A549 (cell line): ENCODE measurements at regions of chr14 and their contacts with region 1.

Region 1: DNA sequence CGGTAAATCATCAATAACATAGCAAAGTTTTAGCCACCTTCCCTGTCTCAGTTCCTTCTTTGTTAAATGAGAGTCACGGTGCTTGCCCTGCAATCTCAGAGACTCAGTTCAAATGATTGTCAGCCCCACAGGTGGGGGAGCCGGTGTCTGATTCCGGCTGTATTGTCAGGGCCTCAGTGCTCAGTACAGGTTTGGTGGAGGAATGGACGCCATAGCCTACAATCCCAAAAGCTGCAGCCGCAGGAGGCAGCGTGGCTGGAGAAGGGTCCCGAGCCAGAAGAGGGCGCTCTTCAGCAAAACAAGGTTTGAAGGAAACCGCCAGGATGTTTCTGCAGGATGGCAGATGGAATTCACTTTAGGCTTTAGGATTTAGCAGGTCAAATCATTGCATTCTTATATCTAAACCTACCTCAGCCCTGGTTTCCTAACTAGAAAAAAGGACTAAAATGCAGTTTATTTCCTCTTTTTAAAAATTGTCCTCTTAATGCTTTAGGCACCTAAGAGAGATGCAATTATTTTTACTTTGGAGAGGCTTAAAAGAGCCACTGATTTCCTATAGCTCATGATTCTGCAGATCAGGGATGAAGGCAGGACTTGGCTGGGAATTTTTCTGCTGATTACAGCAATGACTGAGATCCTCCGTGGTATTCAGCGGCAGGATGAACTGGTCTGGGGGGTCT is 29.2 kb downstream of the FOS start:
- DNase-seq: peak; percentile 64 to 85
- ATAC-seq: peak; percentile 89 to 91
- H3K4me3 ChIP-seq: no peak overlapping the region
- H3K27ac ChIP-seq: peak overlapping the region; percentile 51 to 66; a peak in 4 of 6 replicates
- H3K4me1 ChIP-seq: peaks cover 29% of the 10 kb centered on the region
- CTCF ChIP-seq: peak; percentile 95
- EP300 ChIP-seq: no peak
- POLR2A ChIP-seq: no peak
- RAD21 ChIP-seq: peak; percentile 95

Region 2: GRCh38 chr14:75205591-75205990 is 102.2 kb before region 1 on chr14:
- CTCF ChIA-PET with region 1: no interaction called
- POLR2A ChIA-PET with region 1: no interaction called
- DNase-seq: no peak
- ATAC-seq: no peak
- H3K4me3 ChIP-seq: no peak overlapping the region
- H3K27ac ChIP-seq: no peak overlapping the region
- H3K4me1 ChIP-seq: no peaks in the 10 kb centered on the region
- CTCF ChIP-seq: no peak
- EP300 ChIP-seq: no peak
- POLR2A ChIP-seq: no peak
- RAD21 ChIP-seq: no peak

Region 3: GRCh38 chr14:75277000-75277801 is 30.6 kb before region 1 on chr14:
- CTCF ChIA-PET with region 1: no interaction called
- POLR2A ChIA-PET with region 1: no interaction called
- DNase-seq: peak; percentile 85 to 90
- ATAC-seq: peak; percentile 70 to 75
- H3K4me3 ChIP-seq: peak overlapping the region; percentile 65
- H3K27ac ChIP-seq: peak overlapping the region; percentile 85 to 97
- H3K4me1 ChIP-seq: peaks cover 14% of the 10 kb centered on the region
- CTCF ChIP-seq: no peak; the same call in 2 of the 3 replicates
- EP300 ChIP-seq: no peak
- POLR2A ChIP-seq: no peak
- RAD21 ChIP-seq: no peak; a peak in 1 of 5 replicates

Region 4: DNA sequence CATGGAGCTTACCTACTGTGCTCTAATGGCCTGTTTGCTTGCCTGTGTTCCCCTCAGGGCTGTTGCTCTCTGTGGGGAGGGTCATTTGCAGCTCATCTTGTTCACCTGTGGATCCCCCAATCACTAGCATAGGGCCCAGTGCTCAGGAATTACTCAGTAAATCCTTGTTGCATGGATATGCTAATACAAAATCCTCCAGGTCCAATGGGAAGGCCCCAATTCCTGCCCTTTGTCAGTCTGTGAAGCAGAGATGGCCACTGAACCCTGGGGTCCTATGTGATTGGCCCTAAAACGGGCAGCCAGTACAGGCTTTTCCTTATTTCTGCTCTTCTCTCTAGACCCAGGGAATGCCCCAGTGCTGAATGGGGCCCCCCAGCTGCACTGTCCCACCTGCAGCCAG is 14.9 kb after region 1 on chr14:
- CTCF ChIA-PET with region 1: interaction called, 40 read pairs
- POLR2A ChIA-PET with region 1: no interaction called
- DNase-seq: no peak
- ATAC-seq: no peak
- H3K4me3 ChIP-seq: no peak overlapping the region
- H3K27ac ChIP-seq: no peak overlapping the region
- H3K4me1 ChIP-seq: no peaks in the 10 kb centered on the region
- CTCF ChIP-seq: no peak
- EP300 ChIP-seq: no peak
- POLR2A ChIP-seq: no peak
- RAD21 ChIP-seq: no peak

Region 5: DNA sequence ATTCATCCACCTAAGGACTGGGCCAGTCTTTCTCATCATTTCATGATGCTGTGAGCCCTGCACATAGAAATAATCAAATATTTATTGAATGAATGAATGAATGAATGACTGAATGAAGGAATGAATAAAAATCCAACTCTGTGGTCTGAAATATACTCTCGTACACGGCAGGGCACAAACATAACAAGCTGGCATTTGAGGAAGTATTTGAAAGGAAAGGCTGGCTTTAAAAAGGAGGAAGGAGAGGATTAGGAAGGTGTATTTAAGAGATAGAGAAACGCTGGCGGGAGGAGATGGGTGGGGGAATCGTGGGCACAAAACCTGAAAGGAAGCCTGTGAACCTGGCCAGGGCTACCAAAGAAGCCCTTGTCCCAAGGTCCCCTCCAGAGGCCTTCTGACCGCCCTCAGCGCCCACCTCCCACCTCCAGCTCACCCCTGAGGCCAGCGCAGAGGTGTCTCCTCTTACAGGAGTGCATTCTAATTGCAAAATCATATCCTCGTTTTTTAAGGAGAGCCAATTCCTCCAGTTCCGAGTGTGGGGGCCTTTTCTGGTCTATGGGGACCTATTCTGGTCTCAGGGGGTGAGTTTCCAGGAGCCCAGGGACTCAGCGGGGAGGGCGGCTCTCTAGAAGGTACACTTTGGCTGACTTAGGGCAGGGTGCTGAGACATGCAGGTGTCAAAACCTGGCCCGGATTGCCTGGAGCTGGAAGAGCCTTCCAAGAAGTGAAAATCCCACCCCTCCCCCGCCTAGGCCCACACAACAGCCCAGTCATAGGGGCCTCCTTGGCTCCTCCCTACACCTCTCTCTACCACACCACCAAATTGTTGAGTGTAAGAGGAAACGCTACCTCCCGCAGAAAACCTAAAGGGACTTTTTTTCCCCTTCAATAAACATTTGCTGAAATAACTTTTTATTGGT is 111.3 kb after region 1 on chr14:
- CTCF ChIA-PET with region 1: interaction called, 12 read pairs
- POLR2A ChIA-PET with region 1: interaction called, 11 read pairs
- DNase-seq: peak in 1 of 2 experiments; percentile 46
- ATAC-seq: peak; percentile 36 to 62; a peak in 3 of 6 replicates
- H3K4me3 ChIP-seq: no peak overlapping the region
- H3K27ac ChIP-seq: peak overlapping the region; percentile 63 to 80
- H3K4me1 ChIP-seq: peaks cover 30% of the 10 kb centered on the region
- CTCF ChIP-seq: no peak
- EP300 ChIP-seq: no peak
- POLR2A ChIP-seq: no peak
- RAD21 ChIP-seq: no peak

Region 6: GRCh38 chr14:75446447-75446846 is 138.6 kb after region 1 on chr14:
- CTCF ChIA-PET with region 1: interaction called, 21 read pairs
- POLR2A ChIA-PET with region 1: no interaction called
- DNase-seq: no peak
- ATAC-seq: no peak
- H3K4me3 ChIP-seq: no peak overlapping the region
- H3K27ac ChIP-seq: no peak overlapping the region
- H3K4me1 ChIP-seq: peaks cover 54% of the 10 kb centered on the region
- CTCF ChIP-seq: no peak
- EP300 ChIP-seq: no peak
- POLR2A ChIP-seq: no peak
- RAD21 ChIP-seq: no peak

Region 7: DNA sequence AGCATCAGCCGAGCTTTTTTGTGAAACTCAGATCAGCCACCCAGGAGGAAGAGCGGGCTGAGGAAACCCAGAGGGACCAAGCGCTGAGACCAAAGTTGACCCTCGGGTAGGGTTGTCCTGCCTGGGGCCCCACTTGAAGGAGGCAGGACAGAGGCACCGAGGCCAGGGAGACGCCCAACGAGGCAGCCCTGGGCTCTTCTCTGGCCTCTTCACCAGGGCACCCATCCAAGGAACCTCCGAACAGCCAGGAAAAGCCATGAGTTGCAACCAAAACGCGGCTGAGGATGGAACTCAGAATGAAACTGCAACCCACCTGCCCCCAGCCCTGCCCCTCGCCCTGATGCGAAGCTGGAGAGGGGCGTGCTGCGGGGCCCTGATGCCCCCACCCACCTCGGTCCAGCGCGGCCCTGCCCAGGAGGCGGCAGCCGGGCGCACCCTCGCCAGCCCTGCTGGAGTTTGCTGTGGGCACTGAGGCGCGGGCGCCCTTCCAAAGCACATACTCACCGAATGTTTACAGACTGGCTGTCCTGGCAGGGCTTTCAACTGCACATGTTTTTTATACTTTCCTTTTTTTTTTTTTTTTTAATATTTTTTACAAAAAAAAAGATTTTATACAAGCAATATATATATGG is 161.9 kb after region 1 on chr14:
- CTCF ChIA-PET with region 1: interaction called, 10 read pairs
- POLR2A ChIA-PET with region 1: no interaction called
- DNase-seq: no peak
- ATAC-seq: no peak
- H3K4me3 ChIP-seq: no peak overlapping the region
- H3K27ac ChIP-seq: no peak overlapping the region
- H3K4me1 ChIP-seq: no peaks in the 10 kb centered on the region
- CTCF ChIP-seq: no peak
- EP300 ChIP-seq: no peak
- POLR2A ChIP-seq: no peak
- RAD21 ChIP-seq: no peak

Region 8: GRCh38 chr14:75554487-75554886 is 246.6 kb after region 1 on chr14:
- CTCF ChIA-PET with region 1: interaction called, 197 read pairs
- POLR2A ChIA-PET with region 1: no interaction called
- DNase-seq: no peak
- ATAC-seq: peak; percentile 45 to 64; a peak in 3 of 6 replicates
- H3K4me3 ChIP-seq: no peak overlapping the region
- H3K27ac ChIP-seq: peak overlapping the region; percentile 59 to 66
- H3K4me1 ChIP-seq: peaks cover 32% of the 10 kb centered on the region
- CTCF ChIP-seq: no peak
- EP300 ChIP-seq: no peak
- POLR2A ChIP-seq: no peak
- RAD21 ChIP-seq: no peak